ENCODE measurements at regions of chr17 and their contacts with region 1.

Region 1: DNA sequence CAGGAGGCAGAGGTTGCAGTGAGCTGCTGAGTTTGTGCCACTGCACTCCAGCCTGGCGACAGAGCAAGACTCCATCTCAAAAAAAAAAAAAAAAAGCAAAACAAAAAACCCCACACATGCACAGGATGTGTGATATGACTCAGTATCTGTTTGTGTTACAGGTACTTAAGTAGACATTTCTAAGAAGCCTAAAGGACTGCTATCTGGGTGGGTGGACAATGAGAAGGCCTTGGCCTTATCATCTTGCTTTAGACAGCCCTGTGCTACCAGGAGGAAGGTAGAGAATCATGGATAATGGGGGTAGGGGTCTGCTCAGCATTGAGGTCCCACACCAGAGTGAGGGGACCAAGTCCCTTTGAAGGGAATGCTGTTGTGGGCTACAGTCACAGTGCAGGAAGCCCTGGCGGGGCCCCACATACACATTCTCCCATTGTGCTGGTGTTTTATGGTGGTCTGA is 26.7 kb downstream of the PLD6 start:
- DNase-seq: peak; percentile 24
- H3K4me3 Mint-ChIP-seq: peak overlapping the region; percentile 72
- H3K27ac Mint-ChIP-seq: peak overlapping the region; percentile 92
- H3K4me1 Mint-ChIP-seq: peaks cover 71% of the 10 kb centered on the region
- H3K27me3 Mint-ChIP-seq: no peaks in the 10 kb centered on the region

Region 2: GRCh38 chr17:17206124-17206912 is 26.9 kb after region 1 on chr17 and contains the start of gene PLD6:
- intact Hi-C with region 1: loop called (anchors 2 kb)
- DNase-seq: peak; percentile 78
- H3K4me3 Mint-ChIP-seq: peak within 1 kb of the TSS; percentile 82
- H3K27ac Mint-ChIP-seq: peak within 1 kb of the TSS; percentile 86
- H3K4me1 Mint-ChIP-seq: peaks cover 9% of the 10 kb centered on the region
- H3K27me3 Mint-ChIP-seq: no peaks in the 10 kb centered on the region
- total RNA-seq, gene PLD6: 8.5 and 9.1 TPM in 2 replicates

Measured in activated T-helper 2 cell treated with anti-CD3 and anti-CD28 coated beads, Interferon-gamma antibody, Interleukin-2, Interleukin-4, amounts not matched to agents 10 μg/mL and 5 μg/mL and 100 μg/mL, durations not matched to agents 14 hours and 24 hours and 36 hours (primary cell).